ENCODE measurements at regions of chr22 and their contacts with region 1.

Region 1: GRCh38 chr22:36387752-36388518 is at the start of gene MYH9:
- DNase-seq: peak; percentile 100
- H3K4me3 Mint-ChIP-seq: peak within 1 kb of the TSS; percentile 83
- H3K27ac Mint-ChIP-seq: peak within 1 kb of the TSS; percentile 96
- H3K4me1 Mint-ChIP-seq: peaks cover 25% of the 10 kb centered on the region
- H3K27me3 Mint-ChIP-seq: no peaks in the 10 kb centered on the region
- total RNA-seq, gene MYH9: 574 to 625 TPM

Region 2: DNA sequence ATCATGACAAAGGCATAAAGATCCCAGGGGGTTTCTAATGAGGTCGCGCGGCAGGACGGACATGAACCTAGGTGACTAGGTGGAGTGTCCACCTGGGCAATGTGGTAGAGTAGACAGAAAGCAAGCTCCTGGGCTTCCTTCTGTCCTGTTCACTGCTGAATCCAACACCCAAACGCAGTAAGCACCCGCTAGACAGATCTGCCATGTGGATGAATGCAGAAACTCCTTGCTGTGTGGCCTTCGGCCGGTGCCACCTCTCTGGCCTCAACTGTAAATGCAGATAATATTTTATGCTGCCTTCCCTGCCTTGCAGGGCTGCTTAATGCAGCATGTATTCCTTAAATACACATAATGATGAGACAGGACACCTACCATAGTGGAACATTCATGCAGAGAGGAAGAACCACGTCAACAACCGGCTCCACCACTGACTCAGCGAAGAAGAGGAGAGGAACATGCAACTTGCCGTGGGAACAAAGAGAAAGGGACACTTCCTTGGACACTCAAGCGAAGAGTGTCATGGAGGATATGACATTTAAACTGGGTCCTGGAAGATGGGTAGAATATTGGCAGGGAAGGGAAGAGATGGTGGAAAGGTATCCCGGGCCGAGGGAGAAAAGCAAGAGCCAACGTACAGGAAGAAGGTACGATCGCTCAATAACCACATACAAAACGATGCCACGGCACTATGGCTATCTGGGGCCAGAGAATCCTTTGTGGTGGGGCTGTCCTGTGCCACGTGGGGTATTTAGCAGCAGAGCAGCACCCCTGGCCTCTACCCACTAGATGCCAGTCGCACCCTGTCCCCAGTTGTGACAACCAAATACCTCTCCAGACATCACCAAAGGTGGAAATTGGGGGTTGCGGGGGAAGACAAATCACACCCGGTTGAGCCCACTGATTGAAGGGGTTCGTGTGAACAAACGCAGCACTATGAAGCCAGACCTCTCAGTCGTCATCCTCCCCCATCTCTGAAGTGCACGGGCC is 30.9 kb before region 1 on chr22:
- CTCF ChIA-PET with region 1: interaction called, 6 read pairs
- intact Hi-C with region 1: loop called (anchors 1 kb)
- DNase-seq: peak; percentile 78
- H3K4me3 Mint-ChIP-seq: peak overlapping the region; percentile 73
- H3K27ac Mint-ChIP-seq: peak overlapping the region; percentile 96
- H3K4me1 Mint-ChIP-seq: peaks cover 98% of the 10 kb centered on the region
- H3K27me3 Mint-ChIP-seq: no peaks in the 10 kb centered on the region

Region 3: DNA sequence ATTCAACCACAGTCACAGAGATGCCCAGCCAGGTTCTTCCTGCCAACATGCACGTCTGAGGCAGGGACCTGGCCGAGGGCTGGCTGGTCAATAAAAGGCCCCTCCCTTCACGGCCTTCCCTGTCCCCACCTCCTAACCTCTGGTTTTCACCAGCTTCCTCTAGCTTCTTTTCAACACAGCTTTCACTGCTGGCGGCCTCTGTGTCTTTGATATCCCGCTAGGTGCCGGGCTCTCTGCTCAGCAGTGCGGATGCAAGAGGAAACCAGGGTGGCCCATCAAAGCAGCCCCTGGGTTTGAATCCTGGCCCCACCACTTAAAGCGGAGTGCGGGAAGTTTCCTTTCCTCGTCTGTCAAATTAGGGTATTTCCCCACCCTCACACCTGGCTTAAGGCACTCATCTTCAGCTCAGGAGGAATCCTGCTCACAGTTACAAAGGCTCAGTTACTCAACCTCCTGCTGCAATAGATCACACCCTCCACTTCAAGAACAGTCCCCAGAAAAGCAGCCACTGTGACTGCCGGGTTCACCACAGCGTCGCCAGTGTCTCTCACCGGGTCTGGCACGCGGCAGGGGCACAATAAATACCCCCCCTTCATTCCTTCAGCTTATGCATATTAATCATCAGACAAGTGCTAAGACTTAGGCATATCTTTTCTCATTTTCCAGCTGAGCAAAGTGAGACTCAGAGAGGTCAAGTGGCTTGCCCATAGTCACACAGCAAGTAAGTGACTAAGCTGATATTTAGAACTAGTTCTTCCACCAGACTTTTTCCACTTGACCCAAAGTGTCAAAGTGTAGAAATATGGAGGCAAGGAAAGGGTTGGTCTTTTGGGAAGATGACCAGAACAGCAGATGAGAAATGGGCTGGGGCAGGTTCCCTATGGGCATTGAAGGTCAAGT is 47.8 kb after region 1 on chr22:
- CTCF ChIA-PET with region 1: interaction called, 3 read pairs
- intact Hi-C with region 1: loop called (anchors 1 kb)
- DNase-seq: peak; percentile 86
- H3K4me3 Mint-ChIP-seq: peak overlapping the region; percentile 49
- H3K27ac Mint-ChIP-seq: peak overlapping the region; percentile 85
- H3K4me1 Mint-ChIP-seq: peaks cover 42% of the 10 kb centered on the region
- H3K27me3 Mint-ChIP-seq: no peaks in the 10 kb centered on the region

Region 4: GRCh38 chr22:36454916-36455570 is 67.1 kb after region 1 on chr22:
- CTCF ChIA-PET with region 1: interaction called, 3 read pairs
- intact Hi-C with region 1: loop called (anchors 1 kb)
- DNase-seq: peak; percentile 96
- H3K4me3 Mint-ChIP-seq: peak overlapping the region; percentile 76
- H3K27ac Mint-ChIP-seq: peak overlapping the region; percentile 75
- H3K4me1 Mint-ChIP-seq: peaks cover 37% of the 10 kb centered on the region
- H3K27me3 Mint-ChIP-seq: no peaks in the 10 kb centered on the region

Region 5: GRCh38 chr22:36470162-36470993 is 82.4 kb after region 1 on chr22:
- CTCF ChIA-PET with region 1: interaction called, 14 read pairs
- intact Hi-C with region 1: no loop called
- DNase-seq: peak; percentile 90
- H3K4me3 Mint-ChIP-seq: no peak overlapping the region
- H3K27ac Mint-ChIP-seq: peak overlapping the region; percentile 46
- H3K4me1 Mint-ChIP-seq: peaks cover 30% of the 10 kb centered on the region
- H3K27me3 Mint-ChIP-seq: no peaks in the 10 kb centered on the region